BJ (cell line): ENCODE measurements at regions of chr3 and their contacts with region 1.

Region 1: GRCh38 chr3:52339612-52340011 is 23.5 kb downstream of the DNAH1 start:
- DNase-seq: peak; percentile 31
- H3K4me3 ChIP-seq: no peak overlapping the region
- H3K27me3 ChIP-seq: no peaks in the 10 kb centered on the region
- CTCF ChIP-seq: peak; percentile 67

Region 2: GRCh38 chr3:52014613-52015012 is 325.0 kb before region 1 on chr3:
- CTCF ChIA-PET with region 1: no interaction called
- POLR2A ChIA-PET with region 1: no interaction called
- DNase-seq: no peak
- H3K4me3 ChIP-seq: no peak overlapping the region
- H3K27me3 ChIP-seq: no peaks in the 10 kb centered on the region
- CTCF ChIP-seq: peak; percentile 56

Region 3: DNA sequence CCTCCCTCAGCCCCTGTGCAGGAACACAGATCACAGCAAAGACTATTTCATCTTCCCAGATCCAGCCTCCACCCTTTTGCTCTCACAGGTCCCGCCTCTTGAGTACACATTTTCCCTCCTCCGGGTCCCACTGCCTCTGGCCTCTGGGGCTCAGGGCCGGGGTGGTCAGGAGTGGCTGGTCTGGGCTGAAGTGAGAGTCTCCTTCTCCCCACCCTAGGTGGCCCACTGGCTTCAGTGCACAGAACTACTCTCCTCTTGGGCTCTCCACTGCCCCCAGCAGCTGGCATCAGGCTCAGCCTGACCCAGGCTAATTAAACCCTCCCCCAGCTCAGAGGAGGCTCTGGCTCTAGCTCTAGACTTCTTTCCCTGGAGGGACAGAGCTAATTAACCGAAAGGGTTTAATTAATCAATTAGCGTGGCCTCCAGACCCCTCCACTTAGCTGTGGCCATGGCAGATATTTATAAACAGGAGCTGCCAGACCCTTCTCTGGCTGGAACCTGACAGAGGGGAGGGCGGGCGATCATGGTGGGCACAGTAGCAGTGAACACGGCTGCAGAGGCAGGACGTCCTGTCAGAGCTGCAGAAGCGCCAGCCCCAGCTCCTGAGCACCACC is 298.4 kb before region 1 on chr3:
- CTCF ChIA-PET with region 1: no interaction called
- POLR2A ChIA-PET with region 1: no interaction called
- DNase-seq: no peak
- H3K4me3 ChIP-seq: no peak overlapping the region
- H3K27me3 ChIP-seq: no peaks in the 10 kb centered on the region
- CTCF ChIP-seq: peak; percentile 40; the same call in 1 of the 2 replicates

Region 4: DNA sequence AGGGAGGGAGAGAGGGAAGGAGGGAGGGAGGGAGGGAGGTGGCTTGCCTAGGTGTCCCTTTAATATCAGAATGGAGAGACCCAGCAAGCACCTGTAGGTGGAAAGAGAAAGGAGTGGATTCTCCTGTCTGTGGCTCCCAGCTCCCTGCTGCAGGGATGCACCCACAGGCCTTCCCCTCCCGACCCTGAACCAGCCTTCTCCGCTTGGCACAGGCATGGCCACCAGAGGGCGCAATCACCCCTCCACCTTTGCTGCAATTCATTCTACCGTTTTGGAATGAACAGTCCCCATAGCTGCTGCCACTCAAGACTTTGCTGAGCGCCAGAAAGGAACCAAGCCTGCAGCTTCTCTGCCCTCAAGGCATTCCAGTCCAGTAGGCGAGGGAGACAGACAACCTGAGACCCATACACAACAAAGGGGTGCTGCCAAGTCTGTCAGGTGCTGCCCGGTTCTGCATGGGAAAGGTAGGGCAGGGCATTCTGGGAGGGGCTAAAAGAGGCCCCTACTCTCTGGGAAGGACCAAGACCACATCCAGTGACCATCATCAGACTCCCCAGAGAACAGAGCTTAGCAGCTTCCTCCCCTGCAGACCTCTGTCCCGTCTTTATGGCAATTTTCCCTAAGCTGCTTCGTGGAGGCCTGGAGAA is 119.1 kb before region 1 on chr3:
- CTCF ChIA-PET with region 1: interaction called, 150 read pairs
- POLR2A ChIA-PET with region 1: no interaction called
- DNase-seq: no peak
- H3K4me3 ChIP-seq: no peak overlapping the region
- H3K27me3 ChIP-seq: no peaks in the 10 kb centered on the region
- CTCF ChIP-seq: peak; percentile 97

Region 5: GRCh38 chr3:52231502-52232293 is 107.9 kb before region 1 on chr3:
- CTCF ChIA-PET with region 1: interaction called, 38 read pairs
- POLR2A ChIA-PET with region 1: no interaction called
- DNase-seq: no peak
- H3K4me3 ChIP-seq: no peak overlapping the region
- H3K27me3 ChIP-seq: no peaks in the 10 kb centered on the region
- CTCF ChIP-seq: peak; percentile 95

Region 6: DNA sequence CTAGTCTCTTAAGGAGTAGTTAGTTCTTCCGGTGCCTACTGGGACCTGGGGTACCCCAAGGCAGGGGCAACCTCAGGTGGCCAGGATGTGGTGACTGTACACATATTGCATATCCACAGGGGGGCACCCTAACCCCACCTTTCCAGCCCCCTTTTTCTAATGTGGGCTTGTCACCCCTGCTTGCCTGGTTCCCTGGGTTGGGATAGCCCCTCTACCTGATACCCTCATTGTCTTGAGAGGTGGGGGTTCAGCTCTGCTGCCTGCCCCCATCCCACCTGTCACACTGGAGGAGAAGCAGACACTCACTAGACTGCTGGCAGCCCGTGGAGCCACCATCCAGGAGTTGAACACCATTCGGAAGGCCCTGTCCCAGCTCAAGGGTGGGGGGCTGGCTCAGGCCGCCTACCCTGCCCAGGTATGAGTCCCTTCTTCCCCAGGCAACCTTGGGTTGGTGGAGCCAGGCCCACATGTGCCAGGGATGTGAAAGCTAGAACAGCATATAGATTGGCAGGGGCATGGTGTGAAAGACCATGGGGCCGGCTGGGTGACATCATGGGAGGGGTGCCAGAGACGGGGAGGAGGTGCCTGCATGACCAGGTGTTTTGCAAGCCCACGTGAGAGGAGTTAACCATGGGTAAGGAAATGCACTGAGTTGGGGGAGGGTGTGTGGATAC is 48.0 kb before region 1 on chr3:
- CTCF ChIA-PET with region 1: interaction called, 65 read pairs
- POLR2A ChIA-PET with region 1: no interaction called
- DNase-seq: no peak
- H3K4me3 ChIP-seq: no peak overlapping the region
- H3K27me3 ChIP-seq: no peaks in the 10 kb centered on the region
- CTCF ChIP-seq: peak; percentile 57

Region 7: GRCh38 chr3:52308308-52308707 is 31.3 kb before region 1 on chr3:
- CTCF ChIA-PET with region 1: no interaction called
- POLR2A ChIA-PET with region 1: no interaction called
- DNase-seq: no peak
- H3K4me3 ChIP-seq: no peak overlapping the region
- H3K27me3 ChIP-seq: no peaks in the 10 kb centered on the region
- CTCF ChIP-seq: no peak

Region 8: GRCh38 chr3:52323526-52324295 is 15.9 kb before region 1 on chr3:
- CTCF ChIA-PET with region 1: interaction called, 17 read pairs
- POLR2A ChIA-PET with region 1: no interaction called
- DNase-seq: no peak
- H3K4me3 ChIP-seq: no peak overlapping the region
- H3K27me3 ChIP-seq: no peaks in the 10 kb centered on the region
- CTCF ChIP-seq: no peak

Region 9: DNA sequence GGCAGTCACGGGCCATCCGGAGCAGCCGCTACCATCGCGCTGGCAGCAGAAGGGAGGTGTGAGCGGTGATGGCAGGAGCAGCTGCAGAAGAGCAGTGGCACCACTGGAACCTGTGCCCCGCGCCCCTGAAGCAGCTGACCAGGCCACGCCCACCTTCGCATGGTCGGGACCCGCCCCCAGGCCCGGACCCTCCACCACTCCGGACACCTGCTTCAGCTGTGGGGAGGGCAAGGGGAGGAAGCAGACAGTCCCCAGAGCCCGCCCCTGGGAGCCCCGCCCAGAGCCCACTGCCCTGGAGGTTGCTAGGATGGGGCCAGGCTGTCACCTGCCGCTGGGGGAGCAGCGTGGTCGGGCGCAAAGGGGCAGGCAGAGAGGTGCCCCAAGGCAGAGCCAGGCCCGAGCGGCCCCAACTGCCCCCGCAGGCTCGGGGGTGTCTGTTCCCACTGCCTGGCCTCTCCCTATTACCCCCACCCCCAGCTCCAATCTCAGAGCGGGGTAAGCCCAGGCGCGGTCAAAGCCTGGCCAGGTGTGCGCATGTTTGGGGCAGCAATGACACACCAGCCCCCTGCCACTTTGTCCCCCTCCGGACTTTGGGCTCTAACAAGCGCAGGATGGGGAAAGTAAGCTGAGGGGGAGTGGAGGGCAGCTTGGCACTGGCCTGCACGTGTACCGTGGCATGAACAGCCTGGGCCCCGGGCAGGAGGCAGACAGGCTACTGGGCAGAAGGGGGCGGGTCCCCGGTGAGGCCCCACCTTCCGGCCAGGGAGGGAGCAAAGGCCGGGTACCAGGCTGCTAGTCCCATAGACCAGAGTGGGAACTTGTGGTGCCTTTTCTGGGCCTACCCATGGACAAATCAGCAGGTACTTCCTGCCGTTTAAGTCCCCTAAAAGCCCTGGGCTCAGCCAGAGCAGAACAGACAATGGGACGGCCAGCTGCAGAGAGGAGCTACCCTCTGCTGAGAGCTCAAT is 375.0 kb after region 1 on chr3:
- CTCF ChIA-PET with region 1: no interaction called
- POLR2A ChIA-PET with region 1: no interaction called
- DNase-seq: no peak
- H3K4me3 ChIP-seq: no peak overlapping the region
- H3K27me3 ChIP-seq: no peaks in the 10 kb centered on the region
- CTCF ChIP-seq: no peak